Naive thymus-derived CD4-positive, alpha-beta T cell (primary cell): ENCODE measurements at regions of chr12 and their contacts with region 1.

Region 1: DNA sequence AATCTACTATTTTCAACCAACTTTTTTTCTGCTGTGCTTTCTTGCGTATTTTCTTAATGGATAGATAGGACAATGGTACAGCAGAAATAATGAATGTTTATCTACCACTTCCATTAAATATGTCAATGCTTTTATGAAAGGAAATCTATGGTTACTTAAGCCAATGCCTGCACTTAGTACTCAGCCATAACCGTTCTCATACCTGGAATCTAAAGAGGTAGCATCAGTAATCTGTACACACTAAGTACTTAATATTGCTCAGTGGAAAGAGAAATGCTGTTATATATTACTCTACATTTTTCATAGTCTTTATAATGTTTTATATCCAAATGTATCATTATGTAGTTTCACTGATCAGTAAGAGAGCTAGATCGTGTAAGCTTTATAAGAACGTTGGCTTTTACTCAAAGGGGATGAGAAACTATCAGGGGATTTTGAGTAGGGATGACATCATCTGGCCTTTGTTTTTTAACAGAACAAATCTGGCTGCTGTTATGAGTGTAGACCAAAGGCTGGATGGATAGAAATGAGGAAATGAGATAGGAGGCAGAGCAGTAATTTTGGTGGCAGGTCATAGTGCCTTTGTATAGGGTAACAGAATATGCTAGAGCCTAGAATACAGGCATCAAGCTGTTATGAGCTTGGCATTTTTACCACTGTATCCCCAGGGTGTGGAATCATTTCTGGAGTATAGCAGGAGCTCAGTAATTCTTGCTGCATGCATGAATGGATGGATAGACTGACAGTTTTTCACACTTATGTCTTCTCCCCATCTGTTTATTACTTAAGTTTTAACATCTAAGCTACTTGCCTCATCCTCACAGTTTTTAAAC is 34.0 kb downstream of the ALG10B start:
- DNase-seq: no peak
- ATAC-seq: no peak
- H3K4me3 ChIP-seq: no peak overlapping the region
- H3K4me3 Mint-ChIP-seq: no peak overlapping the region
- H3K27ac ChIP-seq: no peak overlapping the region
- H3K27ac Mint-ChIP-seq: no peak overlapping the region
- H3K4me1 ChIP-seq: no peaks in the 10 kb centered on the region
- H3K4me1 Mint-ChIP-seq: peaks cover 0 to 8% (median 0%) of the 10 kb centered on the region in 7 donors
- H3K27me3 ChIP-seq: no peaks in the 10 kb centered on the region
- H3K27me3 Mint-ChIP-seq: peaks cover 0 to 6% (median 0%) of the 10 kb centered on the region in 5 donors

Region 2: GRCh38 chr12:38538319-38538718 is 187.8 kb after region 1 on chr12:
- CTCF ChIA-PET with region 1: no interaction called
- POLR2A ChIA-PET with region 1: no interaction called
- intact Hi-C with region 1: loop called in 1 of 2 experiments (anchors 5 kb)
- DNase-seq: no peak
- ATAC-seq: no peak
- H3K4me3 ChIP-seq: no peak overlapping the region
- H3K4me3 Mint-ChIP-seq: no peak overlapping the region
- H3K27ac ChIP-seq: no peak overlapping the region
- H3K27ac Mint-ChIP-seq: no peak overlapping the region
- H3K4me1 ChIP-seq: no peaks in the 10 kb centered on the region
- H3K4me1 Mint-ChIP-seq: peaks cover 0 to 2% (median 0%) of the 10 kb centered on the region in 7 donors
- H3K27me3 ChIP-seq: no peaks in the 10 kb centered on the region
- H3K27me3 Mint-ChIP-seq: no peaks in the 10 kb centered on the region